ENCODE measurements at regions of chr2 and their contacts with region 1.

Region 1: DNA sequence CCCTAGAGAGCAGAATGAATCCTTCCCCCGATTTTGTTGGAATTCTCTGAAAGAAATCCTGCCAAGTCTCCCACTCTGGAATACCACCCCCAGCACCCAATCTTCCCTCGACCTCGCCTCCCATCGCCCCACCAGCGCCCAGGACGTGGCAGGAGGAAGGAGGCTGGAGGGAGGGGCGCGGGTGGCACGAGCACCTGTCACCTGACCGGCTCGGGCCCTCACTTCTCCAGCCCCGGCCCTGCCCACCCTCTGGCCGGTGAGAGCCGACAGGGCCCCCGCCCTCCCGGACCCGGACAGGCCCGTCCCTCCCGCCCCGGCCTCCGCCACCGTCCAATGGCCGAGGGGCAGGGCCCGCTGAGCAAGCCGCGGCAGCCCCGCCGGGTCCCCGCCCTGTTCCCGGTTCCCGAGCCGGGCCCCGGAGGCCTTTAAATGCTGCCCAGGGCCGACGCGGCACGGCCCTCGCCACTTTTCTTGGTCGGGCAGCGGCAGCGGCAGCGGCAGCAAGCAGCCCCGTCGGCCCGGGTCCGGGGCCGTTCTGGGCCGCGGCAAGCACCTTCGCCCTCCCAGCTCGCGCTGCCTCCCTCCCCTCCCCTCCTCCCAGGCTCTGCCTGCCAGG is at the start of gene LGALSL:
- DNase-seq: peak; percentile 85
- ATAC-seq: peak; percentile 92
- total RNA-seq, gene LGALSL: 5.8 TPM

Region 2: DNA sequence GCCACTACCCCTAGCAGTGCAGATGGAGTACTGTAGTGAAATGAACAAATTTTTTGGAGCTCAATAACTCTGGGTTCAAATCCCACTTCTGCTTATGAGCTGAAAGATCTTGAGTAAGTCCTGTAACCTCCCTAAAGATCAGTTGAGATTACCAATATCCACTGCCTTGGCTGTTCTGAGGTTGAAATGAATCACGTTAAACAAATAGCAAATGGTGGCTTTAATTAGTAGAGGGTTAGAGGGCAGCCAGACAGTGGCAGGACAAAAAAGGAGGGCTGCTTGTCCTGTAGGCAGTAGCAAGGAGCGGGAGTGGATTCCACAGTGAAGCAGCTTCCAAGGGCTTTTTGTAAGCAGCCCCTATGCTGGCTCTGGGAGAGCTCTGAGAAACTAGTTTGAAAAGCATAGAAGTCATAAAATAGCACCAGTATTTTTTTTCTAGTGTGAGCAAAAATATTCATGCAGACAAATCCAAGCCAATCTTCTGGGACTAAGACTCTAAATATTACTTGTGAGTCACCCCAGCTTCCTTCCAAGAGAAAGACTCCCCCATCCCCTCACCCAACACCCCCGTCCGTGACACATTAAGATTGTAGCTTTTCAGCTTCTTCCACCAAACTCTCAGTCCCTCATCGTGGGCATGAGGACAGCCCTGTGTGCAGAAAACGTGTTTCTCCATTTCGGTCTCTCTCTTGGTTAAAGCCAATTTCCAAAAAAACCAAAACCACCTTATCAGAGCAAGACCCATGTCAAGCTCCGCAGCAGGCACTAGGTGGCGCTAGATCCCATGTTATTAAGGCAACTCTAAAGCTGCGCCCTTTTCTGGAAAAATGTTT is 123.4 kb before region 1 on chr2:
- intact Hi-C with region 1: no loop called
- DNase-seq: peak; percentile 84
- ATAC-seq: peak; percentile 73

Region 3: DNA sequence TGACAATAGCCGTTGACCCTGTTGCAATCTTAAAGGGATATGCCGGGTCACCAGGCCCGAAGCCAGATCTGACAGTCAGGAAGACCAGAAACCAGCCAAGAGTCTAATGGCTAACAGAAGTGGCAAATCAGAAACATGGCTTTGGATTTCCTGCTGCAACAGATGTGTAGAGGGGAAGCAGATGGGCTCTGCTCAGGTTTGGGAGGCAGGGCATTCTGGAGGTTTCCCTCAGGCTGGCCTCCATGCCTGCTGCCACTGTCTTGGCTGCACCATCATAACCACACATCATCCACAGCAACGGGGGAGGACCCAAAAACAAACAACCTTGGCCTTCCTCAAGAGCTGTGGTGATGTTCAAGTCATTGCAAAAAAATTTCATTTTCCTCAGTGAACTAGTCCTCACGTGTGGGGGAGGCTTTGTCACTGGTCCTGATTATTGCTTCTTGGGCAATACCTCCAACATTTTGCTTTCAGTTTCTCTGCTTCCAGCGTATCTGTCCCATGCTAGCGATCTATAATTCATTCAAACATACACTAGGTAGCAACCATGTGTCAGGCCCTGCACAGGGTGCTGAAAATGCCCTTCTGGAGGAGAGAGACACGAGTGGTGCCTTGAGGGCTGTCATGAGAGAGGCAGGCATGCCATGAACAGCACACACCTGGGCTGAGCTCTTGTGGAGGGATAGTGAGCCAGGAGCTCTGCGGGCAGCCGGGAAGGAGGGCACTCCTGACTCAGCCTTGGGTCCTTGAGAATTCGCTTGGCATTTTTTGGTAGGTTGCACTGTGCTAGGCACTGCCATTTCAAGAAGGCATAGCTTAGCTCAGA is 48.1 kb before region 1 on chr2:
- intact Hi-C with region 1: loop called (anchors 5 kb)
- DNase-seq: peak; percentile 43
- ATAC-seq: no peak

Measured in left ventricle myocardium superior (tissue), 1 donor.